Panc1 (cell line): ENCODE measurements at regions of chr7 and their contacts with region 1.

Region 1: DNA sequence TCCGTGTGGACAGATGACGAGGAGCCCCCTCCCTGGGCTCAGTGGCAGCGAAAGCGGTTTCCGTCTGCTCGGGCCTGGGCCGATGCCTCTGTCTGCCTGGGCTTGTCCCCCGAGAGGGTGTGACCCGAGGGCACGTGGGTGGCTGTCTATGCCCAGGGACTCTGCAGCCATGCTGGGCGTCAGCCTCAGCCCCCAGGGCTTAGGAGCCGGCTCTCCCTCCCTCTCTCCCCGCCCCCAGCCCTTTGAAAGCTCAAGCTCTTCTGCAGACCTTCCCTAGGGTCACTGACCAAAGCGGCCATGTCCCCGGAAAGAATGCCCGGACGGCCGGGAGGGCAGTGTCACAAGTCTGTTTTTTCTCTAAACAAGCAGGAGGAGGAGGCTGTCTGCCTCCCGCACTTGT is 7.1 kb downstream of the MICALL2 start:
- DNase-seq: no peak
- ATAC-seq: no peak
- H3K4me3 ChIP-seq: no peak overlapping the region
- H3K27ac ChIP-seq: peak overlapping the region; percentile 87
- H3K4me1 ChIP-seq: peaks cover 96% of the 10 kb centered on the region
- H3K27me3 ChIP-seq: no peaks in the 10 kb centered on the region
- CTCF ChIP-seq: no peak

Region 2: GRCh38 chr7:1059200-1060091 is 392.8 kb before region 1 on chr7:
- CTCF ChIA-PET with region 1: no interaction called
- POLR2A ChIA-PET with region 1: no interaction called
- in situ Hi-C with region 1: no loop called
- intact Hi-C with region 1: no loop called
- DNase-seq: no peak
- ATAC-seq: peak; percentile 77
- H3K4me3 ChIP-seq: peak overlapping the region in 1 of 2 experiments; percentile 36; a peak in 2 of 4 replicates
- H3K27ac ChIP-seq: no peak overlapping the region
- H3K4me1 ChIP-seq: peaks cover 7% of the 10 kb centered on the region; the same call in 1 of the 2 replicates
- H3K27me3 ChIP-seq: no peaks in the 10 kb centered on the region
- CTCF ChIP-seq: no peak

Region 3: GRCh38 chr7:1288996-1289551 is 163.1 kb before region 1 on chr7:
- CTCF ChIA-PET with region 1: no interaction called
- POLR2A ChIA-PET with region 1: interaction called, 11 read pairs
- in situ Hi-C with region 1: no loop called
- intact Hi-C with region 1: no loop called
- DNase-seq: no peak
- ATAC-seq: no peak
- H3K4me3 ChIP-seq: no peak overlapping the region
- H3K27ac ChIP-seq: no peak overlapping the region
- H3K4me1 ChIP-seq: peaks cover 3% of the 10 kb centered on the region; the same call in 1 of the 2 replicates
- H3K27me3 ChIP-seq: no peaks in the 10 kb centered on the region
- CTCF ChIP-seq: no peak

Region 4: GRCh38 chr7:1607696-1608095 is 155.5 kb after region 1 on chr7:
- CTCF ChIA-PET with region 1: no interaction called
- POLR2A ChIA-PET with region 1: no interaction called
- in situ Hi-C with region 1: no loop called
- intact Hi-C with region 1: no loop called
- DNase-seq: no peak
- ATAC-seq: no peak
- H3K4me3 ChIP-seq: no peak overlapping the region
- H3K27ac ChIP-seq: no peak overlapping the region
- H3K4me1 ChIP-seq: no peaks in the 10 kb centered on the region
- H3K27me3 ChIP-seq: no peaks in the 10 kb centered on the region
- CTCF ChIP-seq: no peak